Lower lobe of right lung (tissue), 2 donors: ENCODE measurements at regions of chr12 and their contacts with region 1.

Region 1: DNA sequence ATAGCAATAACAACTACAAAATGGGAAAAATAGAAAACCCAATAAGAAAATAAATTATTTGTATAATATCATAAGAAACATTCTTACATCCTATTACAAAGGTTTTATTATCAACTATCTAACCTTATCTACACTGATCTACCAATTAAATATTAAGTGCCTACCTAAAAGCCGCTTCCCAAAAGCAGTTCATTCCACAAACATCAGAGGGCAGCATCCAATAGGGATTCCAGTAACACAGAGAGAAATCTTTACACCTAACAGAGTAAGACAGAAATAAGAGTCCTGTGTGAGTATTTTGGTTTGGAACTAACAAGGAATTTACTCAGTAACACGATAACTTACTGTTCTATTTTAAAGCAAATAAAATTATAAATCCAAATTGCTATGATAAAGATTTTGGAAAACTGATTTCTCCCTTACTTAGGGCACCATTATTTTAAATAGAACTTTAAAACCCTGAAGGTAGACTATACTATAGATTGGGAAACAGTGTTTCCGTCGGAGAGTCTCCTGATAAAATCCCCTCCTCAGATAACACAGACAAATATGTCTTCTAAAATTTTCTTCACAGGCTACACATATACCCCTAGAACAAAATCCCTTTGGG is 15.0 kb downstream of the GXYLT1 start:
- DNase-seq: no peak
- ATAC-seq: peak; percentile 80 to 91
- H3K4me3 ChIP-seq: no peak overlapping the region
- H3K27ac ChIP-seq: no peak overlapping the region
- H3K4me1 ChIP-seq: peaks cover 14% of the 10 kb centered on the region
- H3K27me3 ChIP-seq: no peaks in the 10 kb centered on the region
- CTCF ChIP-seq: peak; percentile 81

Region 2: GRCh38 chr12:42332301-42333285 is 202.9 kb after region 1 on chr12:
- intact Hi-C with region 1: loop called (anchors 10 kb)
- DNase-seq: no peak
- ATAC-seq: peak in 1 of 2 donors; percentile 70
- H3K4me3 ChIP-seq: no peak overlapping the region
- H3K27ac ChIP-seq: no peak overlapping the region
- H3K4me1 ChIP-seq: peaks cover 4% of the 10 kb centered on the region
- H3K27me3 ChIP-seq: no peaks in the 10 kb centered on the region
- CTCF ChIP-seq: peak; percentile 66